Heart left ventricle (tissue), 16 donors: ENCODE measurements at regions of chr1 and their contacts with region 1.

Region 1: DNA sequence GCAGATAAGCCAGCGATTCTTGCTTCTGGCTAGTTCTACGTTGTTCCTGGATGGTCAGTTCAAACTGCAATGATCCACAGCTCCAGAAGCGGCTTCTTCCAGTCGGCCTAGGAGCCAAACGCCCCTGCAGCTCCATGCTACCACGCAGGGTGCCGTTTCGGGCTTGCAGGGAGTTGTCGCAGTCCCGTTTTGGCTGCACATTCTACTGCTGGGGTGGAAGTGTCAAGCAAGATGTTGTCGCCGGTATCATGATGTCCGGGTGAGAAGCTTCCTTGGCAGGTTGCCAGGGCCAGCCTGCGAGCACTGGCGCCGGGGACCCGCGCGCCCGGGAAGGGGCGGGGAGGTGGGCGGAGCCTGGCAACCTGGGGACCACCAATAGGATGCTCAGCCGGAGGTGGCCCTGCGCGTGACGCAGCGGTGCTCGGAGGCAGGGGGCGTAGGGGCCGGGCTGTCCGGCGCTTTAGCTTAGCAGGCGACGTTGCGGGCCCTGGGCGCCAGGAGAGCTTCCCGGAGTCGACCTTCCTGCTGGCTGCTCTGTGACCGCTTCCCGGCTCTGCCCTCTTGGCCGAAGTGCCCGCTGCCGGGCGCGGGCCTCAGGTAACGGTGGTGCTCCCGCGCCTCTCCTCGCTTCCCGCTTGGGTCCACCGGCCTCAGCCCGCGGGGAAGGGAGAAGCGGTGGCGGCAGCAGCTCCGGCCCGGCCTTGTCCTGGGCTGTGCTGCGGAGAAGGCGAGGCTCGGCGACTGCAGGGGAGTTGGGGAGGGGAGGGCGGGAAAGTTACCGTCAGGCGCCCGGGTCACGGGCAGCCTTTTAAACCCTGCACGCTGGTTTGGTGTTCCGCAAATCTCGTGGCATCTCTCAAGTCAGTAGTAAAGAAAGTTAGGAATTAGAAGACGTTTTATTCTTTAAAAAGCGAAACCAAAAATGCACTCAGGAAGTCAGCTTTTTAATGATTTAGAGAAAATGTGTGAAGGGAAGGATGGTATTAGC is at the start of gene SOAT1:
- DNase-seq: peak; percentile 94 to 98 (median 96)
- ATAC-seq: peak; percentile 96 to 100 (median 100)
- H3K4me3 ChIP-seq: peak within 1 kb of the TSS; percentile 50 to 98 (median 75)
- H3K27ac ChIP-seq: peak within 1 kb of the TSS; percentile 48 to 96 (median 90)
- H3K4me1 ChIP-seq: peaks cover 0 to 39% (median 12%) of the 10 kb centered on the region in 12 donors
- H3K27me3 ChIP-seq: no peaks in the 10 kb centered on the region
- CTCF ChIP-seq: peak in 9 of 12 donors; percentile 7 to 50 (median 20)
- POLR2A ChIP-seq: peak in 1 of 2 donors; percentile 83
- total RNA-seq, gene SOAT1: 5.5 to 34.8 (median 8.1) TPM

Region 2: GRCh38 chr1:179081687-179082332 is 211.8 kb before region 1 on chr1 and contains the start of gene TOR3A:
- intact Hi-C with region 1: loop called in 5 of 10 experiments (anchors 1 to 5 kb)
- DNase-seq: peak; percentile 94 to 95 (median 95)
- ATAC-seq: peak; percentile 97 to 99 (median 98)
- H3K4me3 ChIP-seq: peak within 1 kb of the TSS; percentile 72 to 100 (median 92)
- H3K27ac ChIP-seq: peak within 1 kb of the TSS; percentile 68 to 93 (median 89)
- H3K4me1 ChIP-seq: peaks cover 0 to 31% (median 16%) of the 10 kb centered on the region in 12 donors
- H3K27me3 ChIP-seq: no peaks in the 10 kb centered on the region
- CTCF ChIP-seq: peak in 1 of 12 donors; percentile 13
- POLR2A ChIP-seq: peak in 1 of 2 donors; percentile 91
- total RNA-seq, gene TOR3A: 6.3 to 22.4 (median 9.9) TPM

Region 3: GRCh38 chr1:179091691-179092165 is 201.9 kb before region 1 on chr1:
- intact Hi-C with region 1: loop called in 1 of 10 experiments (anchors 10 kb)
- DNase-seq: peak in 4 of 5 donors; percentile 29 to 86 (median 50)
- ATAC-seq: peak; percentile 54 to 82 (median 77)
- H3K4me3 ChIP-seq: no peak overlapping the region
- H3K27ac ChIP-seq: peak overlapping the region in 11 of 12 donors; percentile 51 to 81 (median 57)
- H3K4me1 ChIP-seq: peaks cover 0 to 49% (median 28%) of the 10 kb centered on the region in 12 donors
- H3K27me3 ChIP-seq: no peaks in the 10 kb centered on the region
- CTCF ChIP-seq: no peak
- POLR2A ChIP-seq: no peak

Region 4: GRCh38 chr1:179121159-179121938 is 172.3 kb before region 1 on chr1:
- intact Hi-C with region 1: loop called in 2 of 10 experiments (anchors 5 to 10 kb)
- DNase-seq: no peak
- ATAC-seq: no peak
- H3K4me3 ChIP-seq: no peak overlapping the region
- H3K27ac ChIP-seq: no peak overlapping the region
- H3K4me1 ChIP-seq: peaks cover 0 to 16% (median 3%) of the 10 kb centered on the region in 12 donors
- H3K27me3 ChIP-seq: no peaks in the 10 kb centered on the region
- CTCF ChIP-seq: peak; percentile 23 to 74 (median 58)
- POLR2A ChIP-seq: no peak

Region 5: DNA sequence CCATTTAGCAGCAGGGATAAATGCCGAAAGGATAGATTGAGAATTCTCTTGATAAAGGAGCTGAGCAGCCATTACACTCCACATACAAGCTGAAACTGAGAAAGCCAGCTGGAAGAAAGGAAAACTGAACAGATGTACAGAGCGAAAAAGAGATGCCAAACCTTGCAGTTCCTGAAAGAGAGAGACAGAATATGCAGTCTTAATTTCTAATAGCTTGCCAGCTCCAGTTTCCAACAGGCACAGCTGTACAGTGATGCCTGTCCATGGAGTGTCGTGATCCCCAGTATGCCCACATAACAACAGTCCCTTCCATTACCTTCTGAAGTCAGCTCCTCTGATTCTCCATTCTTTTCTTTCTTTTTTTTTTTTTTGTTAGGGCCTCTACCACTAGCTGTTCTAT is 86.8 kb before region 1 on chr1:
- intact Hi-C with region 1: loop called in 1 of 10 experiments (anchors 10 kb)
- DNase-seq: no peak
- ATAC-seq: peak in 3 of 4 donors; percentile 56 to 70 (median 62)
- H3K4me3 ChIP-seq: peak overlapping the region in 1 of 12 donors; percentile 12
- H3K27ac ChIP-seq: no peak overlapping the region
- H3K4me1 ChIP-seq: peaks cover 0 to 36% (median 11%) of the 10 kb centered on the region in 12 donors
- H3K27me3 ChIP-seq: no peaks in the 10 kb centered on the region
- CTCF ChIP-seq: no peak
- POLR2A ChIP-seq: no peak

Region 6: DNA sequence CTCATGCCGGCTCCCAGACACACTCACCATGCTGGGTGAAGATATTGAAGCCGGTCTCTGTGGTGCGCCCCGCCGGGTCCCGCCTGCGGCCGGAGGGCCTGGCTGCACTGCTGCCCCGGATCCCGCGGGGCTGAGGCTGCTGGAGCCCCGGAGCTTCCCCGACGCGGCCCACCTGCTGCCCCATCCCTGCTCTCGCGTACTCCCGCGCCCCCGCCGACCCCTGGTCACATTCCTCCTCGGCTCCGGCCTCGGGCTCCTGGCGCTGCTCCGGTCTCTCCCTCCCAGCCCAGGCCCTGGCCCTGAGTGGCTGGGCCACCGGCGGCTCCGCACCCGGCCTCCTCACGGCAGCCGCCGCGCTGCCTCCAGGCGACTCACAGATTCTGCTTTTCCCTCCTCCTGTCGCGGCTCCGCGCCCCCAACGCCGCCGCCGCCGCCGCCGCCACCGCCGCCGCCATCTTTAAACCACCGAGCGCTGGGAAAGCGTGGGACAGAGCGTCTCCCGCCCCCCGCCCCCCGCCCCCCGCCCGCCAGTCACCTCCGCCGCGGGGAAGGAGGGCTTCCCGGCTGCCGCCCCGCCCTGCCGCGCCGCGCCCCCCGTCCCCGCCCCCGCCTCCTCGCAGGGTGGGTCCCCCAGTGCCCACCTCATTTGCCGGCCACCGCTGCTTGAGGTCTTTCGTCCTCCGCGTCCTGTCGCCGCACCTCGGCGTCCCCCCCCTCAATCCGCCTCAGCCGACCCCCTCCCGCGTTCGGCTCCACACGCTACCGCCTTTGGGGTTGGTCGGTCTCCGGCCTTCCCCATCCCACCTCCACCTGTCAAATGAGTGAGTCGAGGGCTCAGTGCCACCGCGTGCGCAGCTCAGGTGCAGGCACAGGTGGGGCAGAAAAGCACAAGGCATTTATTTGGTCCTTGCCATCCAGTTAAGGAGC is 64.2 kb before region 1 on chr1 and contains the start of gene ABL2:
- intact Hi-C with region 1: loop called in 4 of 10 experiments (anchors 5 to 10 kb)
- DNase-seq: peak; percentile 35 to 73 (median 50)
- ATAC-seq: peak; percentile 41 to 89 (median 76)
- H3K4me3 ChIP-seq: peak within 1 kb of the TSS; percentile 88 to 99 (median 98)
- H3K27ac ChIP-seq: peak within 1 kb of the TSS; percentile 54 to 92 (median 87)
- H3K4me1 ChIP-seq: peaks cover 0 to 30% (median 18%) of the 10 kb centered on the region in 12 donors
- H3K27me3 ChIP-seq: no peaks in the 10 kb centered on the region
- CTCF ChIP-seq: peak in 1 of 12 donors; percentile 6
- POLR2A ChIP-seq: no peak
- total RNA-seq, gene ABL2: 7.0 to 22.0 (median 10.5) TPM

Region 7: GRCh38 chr1:179327679-179328078 is 34.0 kb after region 1 on chr1:
- intact Hi-C with region 1: no loop called
- DNase-seq: no peak
- ATAC-seq: peak in 1 of 4 donors; percentile 57
- H3K4me3 ChIP-seq: no peak overlapping the region
- H3K27ac ChIP-seq: peak overlapping the region in 1 of 12 donors; percentile 51
- H3K4me1 ChIP-seq: peaks cover 0 to 25% (median 0%) of the 10 kb centered on the region in 12 donors
- H3K27me3 ChIP-seq: no peaks in the 10 kb centered on the region
- CTCF ChIP-seq: no peak
- POLR2A ChIP-seq: no peak

Region 8: DNA sequence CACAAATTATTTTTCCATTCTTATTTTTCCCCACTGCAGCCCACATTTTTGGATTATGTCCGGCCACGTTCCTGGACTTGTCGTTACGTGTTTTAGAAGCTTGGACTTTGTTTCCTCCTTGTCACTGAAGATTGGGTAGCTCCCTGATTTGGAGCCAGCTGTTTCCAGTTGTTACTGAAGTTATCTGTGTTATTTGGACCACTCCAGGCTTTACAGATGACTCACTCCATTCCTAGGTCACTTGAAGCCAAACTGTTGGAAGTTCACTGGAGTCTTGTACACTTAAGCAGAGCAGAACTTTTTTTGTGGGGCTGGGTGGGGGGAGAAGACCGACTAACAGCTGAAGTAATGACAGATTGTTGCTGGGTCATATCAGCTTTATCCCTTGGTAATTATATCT is 59.9 kb after region 1 on chr1:
- intact Hi-C with region 1: loop called in 1 of 10 experiments (anchors 10 kb)
- DNase-seq: peak in 4 of 5 donors; percentile 38 to 64 (median 46)
- ATAC-seq: peak; percentile 81 to 99 (median 95)
- H3K4me3 ChIP-seq: no peak overlapping the region
- H3K27ac ChIP-seq: peak overlapping the region in 3 of 12 donors; percentile 31 to 41 (median 38)
- H3K4me1 ChIP-seq: peaks cover 0 to 12% (median 0%) of the 10 kb centered on the region in 12 donors
- H3K27me3 ChIP-seq: no peaks in the 10 kb centered on the region
- CTCF ChIP-seq: no peak
- POLR2A ChIP-seq: no peak